ENCODE measurements at regions of chr5 and their contacts with region 1.

Region 1: DNA sequence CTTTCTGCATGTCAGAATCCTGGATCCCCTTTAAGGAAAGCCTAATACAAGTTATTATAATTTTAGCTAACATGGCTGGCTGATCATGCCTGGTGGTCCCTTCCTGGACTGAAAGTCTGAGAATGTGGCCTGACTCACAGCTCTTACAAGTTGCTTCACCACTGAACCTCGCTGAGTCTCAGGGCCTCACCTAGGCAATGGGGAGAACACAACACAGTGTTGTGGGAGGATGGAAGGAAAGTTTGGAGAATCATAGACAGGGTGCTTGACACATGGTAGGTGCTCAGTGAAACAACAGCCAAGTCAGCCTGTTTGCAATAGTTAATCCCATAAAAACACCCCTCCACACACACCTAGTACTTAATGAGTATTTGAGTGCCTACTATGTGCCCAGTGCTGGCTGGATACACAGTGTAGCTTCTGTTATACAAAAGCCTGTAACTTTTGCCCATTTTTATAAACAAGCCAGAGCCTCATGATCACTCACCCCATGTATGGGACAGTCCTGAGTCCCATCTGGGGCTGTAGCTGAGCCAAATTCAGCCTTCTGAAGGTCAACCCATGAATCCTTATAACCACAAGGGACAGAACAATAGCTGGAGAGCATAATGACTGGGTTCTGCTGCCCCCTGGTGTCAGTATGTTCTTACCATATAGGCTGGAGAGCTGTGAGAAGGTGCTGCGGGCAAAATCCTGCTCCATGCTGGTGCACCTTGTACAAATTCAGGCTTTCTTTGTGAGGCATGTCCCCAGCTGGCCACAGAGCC is 3.9 kb downstream of the ACSL6 start:
- DNase-seq: peak; percentile 70
- ATAC-seq: peak; percentile 78
- H3K4me3 ChIP-seq: no peak overlapping the region
- H3K27ac ChIP-seq: no peak overlapping the region
- H3K4me1 ChIP-seq: peaks cover 9% of the 10 kb centered on the region
- H3K27me3 ChIP-seq: peaks cover 20% of the 10 kb centered on the region
- CTCF ChIP-seq: peak; percentile 74

Region 2: GRCh38 chr5:131589510-131590348 is 417.9 kb before region 1 on chr5:
- intact Hi-C with region 1: loop called (anchors 10 kb)
- DNase-seq: no peak
- ATAC-seq: peak; percentile 86
- H3K4me3 ChIP-seq: no peak overlapping the region
- H3K27ac ChIP-seq: no peak overlapping the region
- H3K4me1 ChIP-seq: no peaks in the 10 kb centered on the region
- H3K27me3 ChIP-seq: no peaks in the 10 kb centered on the region
- CTCF ChIP-seq: peak; percentile 83

Region 3: GRCh38 chr5:131952301-131952857 is 55.2 kb before region 1 on chr5:
- intact Hi-C with region 1: no loop called
- DNase-seq: no peak
- ATAC-seq: no peak
- H3K4me3 ChIP-seq: no peak overlapping the region
- H3K27ac ChIP-seq: no peak overlapping the region
- H3K4me1 ChIP-seq: no peaks in the 10 kb centered on the region
- H3K27me3 ChIP-seq: no peaks in the 10 kb centered on the region
- CTCF ChIP-seq: no peak

Region 4: DNA sequence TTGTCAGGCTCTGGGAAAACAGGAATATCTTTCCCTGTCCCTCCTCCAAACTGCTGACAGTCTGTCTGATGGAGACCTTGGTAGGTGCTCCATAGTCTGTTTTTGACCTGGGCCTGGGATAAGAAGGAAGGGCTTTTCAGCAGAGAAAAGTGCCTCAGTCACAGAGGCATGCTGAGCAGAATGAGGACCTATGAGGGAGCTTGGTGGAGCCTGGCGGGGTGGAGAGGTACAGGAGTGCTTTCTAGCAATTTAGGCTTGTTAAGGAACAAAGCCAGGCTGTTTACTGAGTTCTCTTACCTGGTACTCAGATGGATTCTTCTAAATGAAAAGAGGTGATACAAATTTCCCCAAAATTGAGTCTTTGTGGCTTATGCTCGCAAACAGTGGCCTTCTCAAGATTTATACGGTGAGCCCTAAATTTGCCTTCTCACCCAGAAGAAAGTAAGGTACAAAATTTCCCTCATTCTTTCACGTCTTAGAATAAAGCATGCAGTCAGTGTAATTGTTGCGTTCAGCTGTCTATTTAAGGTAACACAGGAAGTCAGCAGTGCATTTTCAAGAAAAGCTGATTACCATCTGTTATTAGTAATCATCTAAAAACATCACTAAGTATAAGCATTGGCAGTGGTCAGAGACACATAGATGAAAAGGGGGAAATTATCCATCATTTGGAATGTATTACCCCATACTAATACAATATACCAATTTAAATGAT is 621.8 kb after region 1 on chr5:
- intact Hi-C with region 1: no loop called
- DNase-seq: no peak
- ATAC-seq: no peak
- H3K4me3 ChIP-seq: no peak overlapping the region
- H3K27ac ChIP-seq: no peak overlapping the region
- H3K4me1 ChIP-seq: no peaks in the 10 kb centered on the region
- H3K27me3 ChIP-seq: no peaks in the 10 kb centered on the region
- CTCF ChIP-seq: no peak